Activated B cell treated with CpG ODN at 0.5 μM for 24 hours (primary cell): ENCODE measurements at regions of chr15 and their contacts with region 1.

Region 1: DNA sequence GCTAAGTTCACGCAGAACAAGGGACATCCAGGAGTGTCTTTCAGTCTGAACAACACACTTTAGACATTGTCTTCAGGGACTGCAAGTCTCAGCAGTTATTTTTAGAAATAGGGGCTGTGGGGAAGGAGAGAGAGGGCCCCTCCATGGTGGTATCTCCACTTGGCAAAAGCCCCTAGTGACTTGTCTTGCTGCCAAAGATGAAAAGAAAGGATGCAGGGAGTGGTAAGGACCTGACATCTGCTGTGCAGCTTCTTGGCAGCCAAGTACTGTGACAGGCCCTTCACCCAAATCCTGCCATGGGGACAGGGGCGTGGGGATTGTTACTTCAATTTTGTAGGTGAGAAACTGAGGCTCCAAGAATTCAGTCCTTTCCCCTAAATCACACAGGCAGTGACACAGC is 21.0 kb upstream of the SEMA6D start:
- DNase-seq: no peak
- ATAC-seq: no peak
- H3K4me3 Mint-ChIP-seq: no peak overlapping the region
- H3K27ac Mint-ChIP-seq: no peak overlapping the region
- H3K4me1 Mint-ChIP-seq: no peaks in the 10 kb centered on the region
- H3K27me3 Mint-ChIP-seq: peaks cover 3% of the 10 kb centered on the region
- CTCF ChIP-seq: no peak

Region 2: GRCh38 chr15:47177177-47177576 is 519.2 kb before region 1 on chr15:
- CTCF ChIA-PET with region 1: no interaction called
- POLR2A ChIA-PET with region 1: no interaction called
- intact Hi-C with region 1: no loop called
- DNase-seq: no peak
- ATAC-seq: no peak
- H3K4me3 Mint-ChIP-seq: no peak overlapping the region
- H3K27ac Mint-ChIP-seq: no peak overlapping the region
- H3K4me1 Mint-ChIP-seq: no peaks in the 10 kb centered on the region
- H3K27me3 Mint-ChIP-seq: no peaks in the 10 kb centered on the region
- CTCF ChIP-seq: no peak

Region 3: GRCh38 chr15:47607695-47608094 is 88.7 kb before region 1 on chr15:
- CTCF ChIA-PET with region 1: no interaction called
- POLR2A ChIA-PET with region 1: no interaction called
- intact Hi-C with region 1: no loop called
- DNase-seq: no peak
- ATAC-seq: no peak
- H3K4me3 Mint-ChIP-seq: no peak overlapping the region
- H3K27ac Mint-ChIP-seq: no peak overlapping the region
- H3K4me1 Mint-ChIP-seq: no peaks in the 10 kb centered on the region
- H3K27me3 Mint-ChIP-seq: no peaks in the 10 kb centered on the region
- CTCF ChIP-seq: no peak

Region 4: DNA sequence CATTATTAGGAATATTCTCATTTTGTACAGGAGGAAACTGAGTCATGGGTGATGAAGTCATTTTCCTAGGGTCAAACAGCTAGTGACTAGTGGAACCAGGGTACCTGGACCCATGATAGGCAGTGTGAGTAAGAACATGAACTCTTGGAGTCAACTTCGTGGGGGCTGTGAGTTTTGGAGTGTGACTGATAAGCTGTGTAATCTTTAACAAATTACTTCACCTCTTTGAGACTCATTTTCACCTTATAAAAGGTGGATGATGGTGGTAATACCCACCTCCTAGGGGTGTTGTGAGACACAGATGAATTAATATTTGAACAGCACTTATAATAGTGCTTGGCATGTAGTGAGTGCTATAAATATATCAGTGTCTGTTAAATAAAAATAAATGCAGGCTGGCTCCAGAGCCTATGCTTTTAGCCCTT is 30.1 kb after region 1 on chr15:
- CTCF ChIA-PET with region 1: no interaction called
- POLR2A ChIA-PET with region 1: no interaction called
- intact Hi-C with region 1: loop called (anchors 2 kb)
- DNase-seq: no peak
- ATAC-seq: no peak
- H3K4me3 Mint-ChIP-seq: no peak overlapping the region
- H3K27ac Mint-ChIP-seq: no peak overlapping the region
- H3K4me1 Mint-ChIP-seq: no peaks in the 10 kb centered on the region
- H3K27me3 Mint-ChIP-seq: peaks cover 21% of the 10 kb centered on the region
- CTCF ChIP-seq: no peak

Region 5: DNA sequence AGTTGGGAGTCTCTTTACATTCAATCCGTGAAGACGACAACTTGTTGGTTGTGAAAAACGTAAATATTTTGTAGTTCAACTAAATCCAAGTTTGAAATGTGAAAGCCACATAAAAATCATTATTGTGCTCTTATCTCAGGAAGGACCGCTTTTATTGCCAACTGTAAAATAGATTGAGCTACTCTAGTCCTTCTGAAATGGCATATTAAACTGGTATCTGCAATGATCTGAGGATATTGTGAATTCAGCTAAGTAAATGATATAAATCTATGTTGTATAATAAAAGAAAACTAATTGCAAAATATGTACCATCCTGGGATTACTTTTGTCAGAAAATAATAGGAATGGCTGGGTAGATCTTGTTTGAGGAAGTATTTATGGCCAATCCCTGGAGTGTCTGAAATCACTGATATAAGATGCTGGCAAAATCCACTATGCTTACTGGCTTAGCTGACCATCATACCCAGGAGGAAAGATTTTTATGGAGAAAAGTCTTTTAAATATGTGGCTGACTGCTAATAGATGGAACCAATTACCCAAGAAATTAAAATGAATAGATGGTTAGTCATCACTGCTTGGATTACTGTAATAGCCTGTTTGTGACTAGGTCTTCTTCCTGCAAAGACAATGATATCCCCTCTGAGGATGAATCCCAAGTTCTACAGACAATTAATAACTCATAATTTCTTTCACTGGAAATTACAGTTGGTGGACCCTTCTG is 212.8 kb after region 1 on chr15:
- CTCF ChIA-PET with region 1: no interaction called
- POLR2A ChIA-PET with region 1: no interaction called
- intact Hi-C with region 1: no loop called
- DNase-seq: no peak
- ATAC-seq: no peak
- H3K4me3 Mint-ChIP-seq: no peak overlapping the region
- H3K27ac Mint-ChIP-seq: no peak overlapping the region
- H3K4me1 Mint-ChIP-seq: no peaks in the 10 kb centered on the region
- H3K27me3 Mint-ChIP-seq: peaks cover 3% of the 10 kb centered on the region
- CTCF ChIP-seq: no peak